Endothelial cell of umbilical vein (primary cell): ENCODE measurements at regions of chr13 and their contacts with region 1.

Region 1: GRCh38 chr13:106536244-106537034 is 977 bp upstream of the EFNB2 start:
- DNase-seq: peak; percentile 94
- H3K4me3 ChIP-seq: peak overlapping the region; percentile 16 to 54 (median 53)
- H3K27ac ChIP-seq: peak overlapping the region; percentile 35
- H3K4me1 ChIP-seq: peaks cover 37% of the 10 kb centered on the region
- H3K27me3 ChIP-seq: no peaks in the 10 kb centered on the region
- CTCF ChIP-seq: peak; percentile 95 to 96
- POLR2A ChIP-seq: no peak

Region 2: GRCh38 chr13:105116966-105117365 is 1419.5 kb before region 1 on chr13:
- CTCF ChIA-PET with region 1: interaction called, 5 read pairs
- POLR2A ChIA-PET with region 1: no interaction called
- dilution Hi-C with region 1: no loop called
- intact Hi-C with region 1: loop called (anchors 5 kb)
- DNase-seq: peak; percentile 90
- H3K4me3 ChIP-seq: no peak overlapping the region
- H3K27ac ChIP-seq: peak overlapping the region; percentile 52
- H3K4me1 ChIP-seq: peaks cover 30% of the 10 kb centered on the region
- H3K27me3 ChIP-seq: no peaks in the 10 kb centered on the region
- CTCF ChIP-seq: no peak
- POLR2A ChIP-seq: no peak

Region 3: DNA sequence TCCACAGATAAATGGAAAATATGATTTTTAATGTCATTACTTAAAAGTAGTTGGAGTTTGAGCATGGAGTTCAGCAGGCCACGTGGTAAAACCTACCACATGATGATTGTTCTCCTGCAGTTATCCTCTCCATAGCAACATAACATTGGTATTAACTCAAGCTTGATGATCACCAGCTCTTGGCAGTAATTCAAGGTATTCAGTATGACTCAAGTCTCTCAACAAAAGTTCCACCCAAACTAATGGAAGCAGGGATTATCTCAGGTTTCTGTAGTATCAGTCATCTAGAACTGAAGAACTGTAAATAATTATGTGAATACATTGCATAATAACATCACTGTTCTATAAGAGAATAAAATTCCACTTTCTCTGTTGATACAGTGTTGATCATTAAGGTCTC is 1093.5 kb before region 1 on chr13:
- CTCF ChIA-PET with region 1: interaction called, 7 read pairs
- POLR2A ChIA-PET with region 1: no interaction called
- dilution Hi-C with region 1: no loop called
- intact Hi-C with region 1: loop called (anchors 2 kb)
- DNase-seq: peak; percentile 93
- H3K4me3 ChIP-seq: no peak overlapping the region
- H3K27ac ChIP-seq: peak overlapping the region; percentile 65
- H3K4me1 ChIP-seq: peaks cover 24% of the 10 kb centered on the region
- H3K27me3 ChIP-seq: no peaks in the 10 kb centered on the region
- CTCF ChIP-seq: no peak
- POLR2A ChIP-seq: no peak

Region 4: GRCh38 chr13:105758918-105759860 is 777.2 kb before region 1 on chr13:
- CTCF ChIA-PET with region 1: no interaction called
- POLR2A ChIA-PET with region 1: no interaction called
- dilution Hi-C with region 1: no loop called
- intact Hi-C with region 1: no loop called
- DNase-seq: no peak
- H3K4me3 ChIP-seq: no peak overlapping the region
- H3K27ac ChIP-seq: no peak overlapping the region
- H3K4me1 ChIP-seq: no peaks in the 10 kb centered on the region
- H3K27me3 ChIP-seq: no peaks in the 10 kb centered on the region
- CTCF ChIP-seq: no peak
- POLR2A ChIP-seq: no peak

Region 5: GRCh38 chr13:105878119-105878700 is 658.2 kb before region 1 on chr13:
- CTCF ChIA-PET with region 1: no interaction called
- POLR2A ChIA-PET with region 1: no interaction called
- dilution Hi-C with region 1: no loop called
- intact Hi-C with region 1: loop called (anchors 1 kb)
- DNase-seq: peak; percentile 93
- H3K4me3 ChIP-seq: no peak overlapping the region
- H3K27ac ChIP-seq: peak overlapping the region; percentile 35
- H3K4me1 ChIP-seq: peaks cover 12% of the 10 kb centered on the region
- H3K27me3 ChIP-seq: no peaks in the 10 kb centered on the region
- CTCF ChIP-seq: no peak
- POLR2A ChIP-seq: no peak

Region 6: GRCh38 chr13:106487129-106487528 is 49.3 kb before region 1 on chr13:
- CTCF ChIA-PET with region 1: no interaction called
- POLR2A ChIA-PET with region 1: no interaction called
- dilution Hi-C with region 1: no loop called
- intact Hi-C with region 1: loop called (anchors 1 kb)
- DNase-seq: peak; percentile 10
- H3K4me3 ChIP-seq: no peak overlapping the region
- H3K27ac ChIP-seq: no peak overlapping the region
- H3K4me1 ChIP-seq: peaks cover 8% of the 10 kb centered on the region
- H3K27me3 ChIP-seq: no peaks in the 10 kb centered on the region
- CTCF ChIP-seq: no peak
- POLR2A ChIP-seq: no peak

Region 7: DNA sequence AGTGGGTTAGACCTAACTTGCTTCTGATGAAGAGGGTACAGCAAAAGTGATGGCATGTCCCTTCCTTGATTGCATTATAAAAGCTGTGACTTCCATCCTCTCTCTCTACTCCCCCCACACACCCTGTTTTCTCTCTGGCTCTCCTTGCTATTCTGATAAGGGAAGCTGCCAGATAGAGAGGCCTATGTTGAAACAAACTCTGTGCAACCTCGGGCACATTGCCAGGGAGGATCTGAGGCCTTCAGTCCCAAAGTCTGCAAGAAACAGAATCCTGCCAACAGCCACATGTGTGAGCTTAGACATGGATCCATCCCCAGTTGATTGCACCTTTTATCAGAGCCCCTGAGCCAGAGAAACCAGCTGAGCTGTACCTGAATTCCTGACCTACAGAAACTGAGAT is 76.2 kb after region 1 on chr13:
- CTCF ChIA-PET with region 1: no interaction called
- POLR2A ChIA-PET with region 1: no interaction called
- dilution Hi-C with region 1: no loop called
- intact Hi-C with region 1: no loop called
- DNase-seq: no peak
- H3K4me3 ChIP-seq: no peak overlapping the region
- H3K27ac ChIP-seq: no peak overlapping the region
- H3K4me1 ChIP-seq: peaks cover 4% of the 10 kb centered on the region
- H3K27me3 ChIP-seq: peaks cover 0 to 2% of the 10 kb centered on the region in 2 experiments
- CTCF ChIP-seq: no peak
- POLR2A ChIP-seq: no peak

Region 8: DNA sequence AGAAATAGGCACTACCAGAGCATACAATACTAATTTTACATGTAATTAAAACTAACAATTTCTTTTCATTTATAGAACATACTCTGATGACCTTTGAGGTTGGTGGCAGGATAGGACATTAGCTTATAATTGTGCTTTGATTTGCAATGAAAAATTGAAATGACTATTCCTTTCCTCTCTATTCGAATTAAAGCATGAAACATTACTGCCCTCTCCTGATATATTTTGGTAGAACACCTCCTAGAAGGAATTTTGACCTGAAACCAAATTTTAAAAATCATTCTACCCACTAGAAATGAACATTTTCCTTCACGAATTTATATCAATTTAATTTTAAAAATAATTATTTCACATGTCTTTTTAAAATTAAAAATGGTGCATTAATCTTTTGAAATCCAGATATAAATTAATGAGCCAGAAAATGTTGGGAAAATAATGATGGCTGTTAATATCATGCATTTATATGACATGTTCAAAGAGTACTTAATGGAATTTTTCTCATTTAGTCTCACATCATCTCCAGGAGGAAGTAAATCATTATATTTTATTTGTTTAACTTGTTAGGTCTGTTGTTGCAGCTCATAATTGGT is 587.8 kb after region 1 on chr13:
- CTCF ChIA-PET with region 1: interaction called, 8 read pairs
- POLR2A ChIA-PET with region 1: interaction called, 4 read pairs
- dilution Hi-C with region 1: no loop called
- intact Hi-C with region 1: loop called (anchors 1 kb)
- DNase-seq: peak; percentile 54
- H3K4me3 ChIP-seq: no peak overlapping the region
- H3K27ac ChIP-seq: no peak overlapping the region
- H3K4me1 ChIP-seq: no peaks in the 10 kb centered on the region
- H3K27me3 ChIP-seq: no peaks in the 10 kb centered on the region
- CTCF ChIP-seq: peak; percentile 20 to 22
- POLR2A ChIP-seq: no peak

Region 9: DNA sequence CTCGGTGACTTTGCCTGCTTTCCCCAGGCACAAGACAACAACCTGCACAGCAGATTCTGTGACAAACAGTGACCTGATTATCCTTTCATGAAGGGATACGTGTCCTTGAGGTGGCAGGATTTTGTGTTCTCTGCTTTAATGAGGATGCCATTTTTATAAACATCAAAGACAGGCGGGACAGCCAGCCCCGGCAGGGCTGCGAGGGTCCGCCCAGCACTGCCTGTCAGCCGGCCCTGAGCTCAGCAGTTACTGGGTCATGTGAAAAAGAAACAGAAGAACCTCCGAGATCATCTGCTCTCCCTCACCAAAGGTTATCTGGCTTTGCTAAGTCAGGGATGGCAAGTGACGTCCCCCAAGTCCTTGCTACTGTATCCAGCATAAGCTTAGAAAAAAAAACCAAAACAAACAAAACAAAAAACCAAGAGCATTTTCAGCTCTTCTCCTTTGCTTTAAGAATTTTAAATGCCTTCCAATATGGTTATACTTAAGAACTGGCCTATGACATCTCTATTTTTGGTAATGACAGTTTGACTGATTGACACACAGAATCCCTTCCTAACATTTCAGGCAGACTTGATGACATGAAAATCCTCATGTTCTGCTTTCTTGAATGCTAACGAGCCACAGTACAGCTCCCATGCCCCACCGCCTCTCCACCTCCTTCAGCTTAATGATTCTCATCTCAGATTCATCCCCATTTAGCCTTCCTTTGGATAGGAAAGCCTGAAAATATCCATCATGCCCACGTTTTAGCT is 698.1 kb after region 1 on chr13:
- CTCF ChIA-PET with region 1: no interaction called
- POLR2A ChIA-PET with region 1: no interaction called
- dilution Hi-C with region 1: no loop called
- intact Hi-C with region 1: no loop called
- DNase-seq: no peak
- H3K4me3 ChIP-seq: no peak overlapping the region
- H3K27ac ChIP-seq: no peak overlapping the region
- H3K4me1 ChIP-seq: no peaks in the 10 kb centered on the region
- H3K27me3 ChIP-seq: no peaks in the 10 kb centered on the region
- CTCF ChIP-seq: no peak
- POLR2A ChIP-seq: no peak

Region 10: GRCh38 chr13:107251341-107251740 is 714.9 kb after region 1 on chr13:
- CTCF ChIA-PET with region 1: no interaction called
- POLR2A ChIA-PET with region 1: no interaction called
- dilution Hi-C with region 1: no loop called
- intact Hi-C with region 1: no loop called
- DNase-seq: no peak
- H3K4me3 ChIP-seq: no peak overlapping the region
- H3K27ac ChIP-seq: no peak overlapping the region
- H3K4me1 ChIP-seq: peaks cover 3% of the 10 kb centered on the region
- H3K27me3 ChIP-seq: no peaks in the 10 kb centered on the region
- CTCF ChIP-seq: no peak
- POLR2A ChIP-seq: no peak